ENCODE measurements at regions of chr12 and their contacts with region 1.

Region 1: DNA sequence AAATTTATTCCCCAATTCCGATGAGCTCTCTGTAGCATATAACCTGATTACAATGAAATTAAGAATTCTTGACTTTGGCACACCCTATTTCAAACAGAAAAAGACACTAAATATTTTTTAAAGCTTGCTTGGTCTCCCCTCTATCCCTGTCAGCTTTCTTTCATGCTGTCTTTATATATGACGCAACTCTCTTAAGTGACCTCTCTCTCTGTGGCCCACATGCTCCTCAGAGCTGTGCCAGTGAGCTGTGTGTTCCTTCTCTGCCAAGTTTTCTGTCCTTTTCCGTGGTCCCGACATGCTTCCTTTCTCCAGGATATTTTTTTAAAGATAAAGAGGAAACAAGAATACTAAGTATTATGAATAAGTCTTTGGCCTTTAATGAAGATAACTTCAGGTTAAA is 484.0 kb downstream of the ETNK1 start:
- DNase-seq: no peak
- H3K4me3 ChIP-seq: no peak overlapping the region
- H3K27ac ChIP-seq: no peak overlapping the region
- H3K4me1 ChIP-seq: no peaks in the 10 kb centered on the region
- CTCF ChIP-seq: no peak

Region 2: GRCh38 chr12:23098517-23098916 is 10.4 kb before region 1 on chr12:
- CTCF ChIA-PET with region 1: no interaction called
- POLR2A ChIA-PET with region 1: no interaction called
- intact Hi-C with region 1: loop called (anchors 2 kb)
- DNase-seq: no peak
- H3K4me3 ChIP-seq: no peak overlapping the region
- H3K27ac ChIP-seq: no peak overlapping the region
- H3K4me1 ChIP-seq: no peaks in the 10 kb centered on the region
- CTCF ChIP-seq: no peak

Region 3: GRCh38 chr12:23186950-23187349 is 78.0 kb after region 1 on chr12:
- CTCF ChIA-PET with region 1: no interaction called
- POLR2A ChIA-PET with region 1: no interaction called
- intact Hi-C with region 1: no loop called
- DNase-seq: no peak
- H3K4me3 ChIP-seq: no peak overlapping the region
- H3K27ac ChIP-seq: no peak overlapping the region
- H3K4me1 ChIP-seq: no peaks in the 10 kb centered on the region
- CTCF ChIP-seq: no peak

Region 4: GRCh38 chr12:23197266-23197665 is 88.3 kb after region 1 on chr12:
- CTCF ChIA-PET with region 1: no interaction called
- POLR2A ChIA-PET with region 1: no interaction called
- intact Hi-C with region 1: no loop called
- DNase-seq: no peak
- H3K4me3 ChIP-seq: no peak overlapping the region
- H3K27ac ChIP-seq: no peak overlapping the region
- H3K4me1 ChIP-seq: no peaks in the 10 kb centered on the region
- CTCF ChIP-seq: no peak